AG04450 (cell line): ENCODE measurements at regions of chr2 and their contacts with region 1.

Region 1: GRCh38 chr2:227766373-227766883 is 20.7 kb downstream of the SCYGR8 start:
- DNase-seq: peak; percentile 50
- H3K4me3 ChIP-seq: no peak overlapping the region
- H3K27ac ChIP-seq: peak overlapping the region; percentile 21
- H3K27me3 ChIP-seq: no peaks in the 10 kb centered on the region
- CTCF ChIP-seq: peak; percentile 83

Region 2: GRCh38 chr2:227132986-227133385 is 633.4 kb before region 1 on chr2:
- CTCF ChIA-PET with region 1: interaction called, 10 read pairs
- POLR2A ChIA-PET with region 1: no interaction called
- DNase-seq: no peak
- H3K4me3 ChIP-seq: no peak overlapping the region
- H3K27ac ChIP-seq: no peak overlapping the region
- H3K27me3 ChIP-seq: peaks cover 2% of the 10 kb centered on the region
- CTCF ChIP-seq: no peak

Region 3: GRCh38 chr2:227479865-227480475 is 286.5 kb before region 1 on chr2:
- CTCF ChIA-PET with region 1: interaction called, 23 read pairs
- POLR2A ChIA-PET with region 1: no interaction called
- DNase-seq: no peak
- H3K4me3 ChIP-seq: no peak overlapping the region
- H3K27ac ChIP-seq: no peak overlapping the region
- H3K27me3 ChIP-seq: no peaks in the 10 kb centered on the region
- CTCF ChIP-seq: peak; percentile 50